ENCODE measurements at regions of chr22 and their contacts with region 1.

Region 1: DNA sequence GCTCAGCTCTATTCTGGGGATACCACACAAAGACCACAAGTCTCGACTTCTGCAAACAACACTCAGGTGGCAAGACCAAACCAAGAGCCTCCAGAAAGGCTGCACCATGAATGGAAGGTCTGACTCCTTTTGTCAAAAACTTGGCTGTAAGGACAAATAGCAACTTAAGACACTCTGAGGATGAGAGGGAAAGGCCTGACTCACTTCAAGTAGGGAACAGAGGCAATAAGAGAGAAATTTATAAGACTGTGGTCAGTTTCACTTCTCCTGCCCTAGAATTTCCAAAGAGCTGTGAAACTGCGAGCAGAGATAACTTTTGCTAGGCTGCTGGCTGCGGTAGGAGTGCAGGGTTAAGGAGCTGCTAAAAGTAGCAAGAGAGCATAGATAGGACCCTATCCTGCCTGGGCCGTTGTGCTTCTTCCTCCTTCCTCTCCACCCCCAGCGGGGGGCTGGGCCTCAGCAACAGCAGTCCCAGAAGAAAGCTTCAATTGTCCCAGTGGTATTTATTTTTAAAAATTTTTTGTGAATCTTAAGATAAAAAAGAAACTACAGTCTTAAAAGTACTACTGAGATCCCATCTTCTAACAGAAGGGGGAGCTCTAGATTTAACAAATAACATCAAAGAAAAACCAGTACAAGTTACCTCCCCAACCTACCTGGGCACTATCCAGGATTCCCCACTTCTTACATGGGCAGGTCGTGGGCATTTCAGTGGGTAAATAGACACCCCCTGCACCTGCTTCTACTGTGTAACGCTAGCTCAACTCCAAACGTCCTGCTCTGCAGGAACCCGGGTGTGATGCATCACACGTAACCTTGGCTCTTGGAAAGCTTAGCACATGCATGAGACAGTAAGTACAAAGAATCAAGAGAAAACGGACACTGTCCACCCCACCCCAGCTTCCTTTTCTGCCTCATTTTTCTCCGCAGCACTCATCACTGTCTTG is 66.4 kb downstream of the SGSM3 start:
- DNase-seq: peak; percentile 29 to 70
- ATAC-seq: peak; percentile 74 to 79; a peak in 5 of 6 replicates
- H3K4me3 ChIP-seq: no peak overlapping the region
- H3K27ac ChIP-seq: peak overlapping the region; percentile 81 to 83
- H3K4me1 ChIP-seq: peaks cover 41% of the 10 kb centered on the region
- CTCF ChIP-seq: peak; percentile 68
- EP300 ChIP-seq: no peak
- POLR2A ChIP-seq: no peak
- RAD21 ChIP-seq: peak; percentile 57 to 75

Region 2: DNA sequence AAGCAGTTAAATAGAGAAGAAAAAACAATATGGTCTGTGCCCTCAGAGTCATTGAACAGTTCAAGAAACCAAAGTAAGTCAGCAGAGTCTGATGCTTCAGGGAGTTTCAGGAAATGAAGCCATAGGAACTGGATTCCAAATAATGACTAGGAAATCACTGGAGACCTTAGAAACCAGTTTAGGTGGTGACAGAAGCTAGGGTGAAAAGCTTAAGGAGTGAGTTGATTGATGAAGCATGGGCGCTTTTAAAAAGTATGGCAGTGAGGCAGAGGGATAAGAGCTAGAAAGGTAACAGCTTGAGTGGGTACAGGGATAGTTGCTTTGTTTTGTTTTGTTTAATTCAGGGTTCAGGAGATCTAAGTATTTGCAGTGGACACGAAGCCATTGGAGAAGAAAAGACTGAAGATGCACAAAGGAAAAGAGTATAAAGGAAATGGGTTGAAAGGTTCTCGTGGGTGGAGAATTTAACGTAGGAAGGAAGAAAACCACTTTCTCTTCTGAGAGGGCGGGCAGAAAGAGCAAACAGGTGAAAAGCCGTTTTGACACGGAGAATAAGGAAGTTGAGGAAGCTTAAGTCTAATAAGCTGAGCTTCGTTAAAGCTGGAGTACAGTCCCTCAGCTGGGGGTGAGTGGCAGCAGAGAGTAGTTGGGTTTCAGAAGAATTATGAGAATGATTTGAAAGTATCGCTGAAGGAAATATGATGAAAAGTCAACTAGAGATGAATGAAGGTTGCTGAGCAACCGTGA is 51.6 kb before region 1 on chr22:
- CTCF ChIA-PET with region 1: no interaction called
- POLR2A ChIA-PET with region 1: no interaction called
- DNase-seq: no peak
- ATAC-seq: no peak
- H3K4me3 ChIP-seq: no peak overlapping the region
- H3K27ac ChIP-seq: no peak overlapping the region
- H3K4me1 ChIP-seq: no peaks in the 10 kb centered on the region
- CTCF ChIP-seq: no peak
- EP300 ChIP-seq: no peak
- POLR2A ChIP-seq: no peak
- RAD21 ChIP-seq: no peak

Region 3: GRCh38 chr22:40420341-40421042 is 16.3 kb before region 1 on chr22:
- CTCF ChIA-PET with region 1: interaction called, 25 read pairs
- POLR2A ChIA-PET with region 1: no interaction called
- DNase-seq: no peak
- ATAC-seq: no peak
- H3K4me3 ChIP-seq: no peak overlapping the region
- H3K27ac ChIP-seq: no peak overlapping the region
- H3K4me1 ChIP-seq: no peaks in the 10 kb centered on the region
- CTCF ChIP-seq: no peak
- EP300 ChIP-seq: no peak
- POLR2A ChIP-seq: no peak
- RAD21 ChIP-seq: no peak

Region 4: DNA sequence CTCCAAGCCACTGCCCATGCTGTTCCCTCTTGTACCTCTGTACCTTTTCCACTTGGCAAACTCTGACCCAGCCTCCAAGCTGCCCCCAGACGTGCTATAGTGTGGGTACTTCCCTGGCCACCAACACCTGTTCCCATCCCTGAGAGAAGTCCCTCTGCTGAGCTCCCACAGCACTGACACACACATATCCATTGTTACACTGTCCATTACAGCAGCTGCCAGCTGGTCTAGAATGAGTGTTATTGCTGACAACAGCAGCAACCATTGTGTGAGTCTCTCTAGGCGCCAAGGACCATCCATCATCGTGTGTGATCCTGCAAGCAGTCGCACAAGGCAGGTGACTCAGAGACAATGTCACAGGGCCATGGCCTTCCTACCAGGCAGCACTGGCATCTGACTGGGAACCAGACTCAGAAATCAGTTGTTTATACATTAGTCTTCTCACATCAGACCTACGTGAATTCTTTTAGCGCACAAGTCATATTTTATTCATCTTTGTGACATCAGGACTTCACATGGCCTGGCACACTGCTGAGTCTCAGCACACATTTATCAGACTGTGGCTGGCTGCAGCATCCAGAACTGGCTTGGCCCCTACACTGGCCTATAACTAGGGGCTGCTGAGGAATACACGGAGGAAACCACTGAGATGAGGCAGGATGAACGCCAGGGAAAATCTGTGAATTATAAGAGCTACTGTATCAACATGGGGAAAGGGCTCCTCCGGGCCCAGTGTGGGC is 10.0 kb before region 1 on chr22:
- CTCF ChIA-PET with region 1: interaction called, 25 read pairs
- POLR2A ChIA-PET with region 1: no interaction called
- DNase-seq: no peak
- ATAC-seq: no peak
- H3K4me3 ChIP-seq: no peak overlapping the region
- H3K27ac ChIP-seq: no peak overlapping the region
- H3K4me1 ChIP-seq: no peaks in the 10 kb centered on the region
- CTCF ChIP-seq: no peak
- EP300 ChIP-seq: no peak
- POLR2A ChIP-seq: no peak
- RAD21 ChIP-seq: no peak

Region 5: GRCh38 chr22:40487663-40488249 is 51.0 kb after region 1 on chr22:
- CTCF ChIA-PET with region 1: interaction called, 27 read pairs
- POLR2A ChIA-PET with region 1: no interaction called
- DNase-seq: peak; percentile 28 to 50
- ATAC-seq: peak; percentile 59 to 70; a peak in 4 of 6 replicates
- H3K4me3 ChIP-seq: no peak overlapping the region
- H3K27ac ChIP-seq: peak overlapping the region; percentile 44 to 73; a peak in 4 of 6 replicates
- H3K4me1 ChIP-seq: peaks cover 62% of the 10 kb centered on the region
- CTCF ChIP-seq: peak; percentile 66
- EP300 ChIP-seq: no peak
- POLR2A ChIP-seq: no peak
- RAD21 ChIP-seq: peak; percentile 44 to 50; a peak in 4 of 5 replicates